ENCODE measurements at regions of chr18 and their contacts with region 1.

Region 1: DNA sequence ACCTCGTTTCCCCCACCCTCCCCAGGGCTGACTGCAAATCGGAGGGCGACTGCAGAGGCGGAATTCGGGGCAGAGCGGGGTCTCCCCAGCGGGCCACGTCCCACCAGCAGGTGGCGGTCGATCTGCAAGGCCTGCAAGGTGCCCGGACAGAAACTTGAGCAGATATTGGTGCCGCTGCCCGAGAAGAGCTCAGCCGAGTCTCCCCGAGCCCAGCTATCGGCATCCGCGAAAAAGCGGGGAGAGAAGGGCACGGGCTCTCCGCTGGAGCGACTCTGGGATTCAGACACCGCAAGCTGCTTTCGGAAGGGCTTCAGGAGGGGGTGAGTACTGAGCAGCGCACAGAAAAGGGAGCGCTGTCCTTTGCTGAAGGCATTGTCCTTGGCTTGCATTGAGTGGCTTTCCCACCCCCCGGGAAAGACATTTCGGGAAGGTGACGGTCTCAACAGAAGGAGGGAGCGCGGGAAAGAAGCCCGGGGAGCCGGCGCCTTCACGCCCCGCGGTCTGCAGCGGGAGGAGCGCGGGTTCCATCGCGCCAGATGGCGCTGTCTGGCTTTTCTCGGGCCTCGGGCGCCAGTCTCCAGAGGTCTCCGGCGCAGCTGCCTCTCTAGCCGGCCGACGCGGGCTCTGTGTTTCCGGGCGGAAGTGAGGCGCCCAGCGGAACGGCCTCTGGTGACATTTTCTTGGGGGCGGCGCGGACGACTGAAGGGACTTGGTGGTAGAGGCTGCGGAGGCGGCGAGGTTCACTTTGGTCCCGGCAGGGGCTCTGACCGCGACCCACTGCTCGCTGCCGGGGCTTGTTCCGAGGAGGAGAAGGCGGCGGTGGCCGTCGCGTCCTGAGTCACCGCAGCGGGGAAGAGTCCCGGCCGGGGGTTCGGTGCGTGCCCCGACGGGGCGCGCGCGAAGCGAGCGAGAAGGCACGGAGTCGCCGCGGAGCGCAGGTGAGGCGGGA is 69.5 kb downstream of the HAUS1 start:
- DNase-seq: peak; percentile 92
- H3K4me3 Mint-ChIP-seq: peak overlapping the region; percentile 84
- H3K27ac Mint-ChIP-seq: peak overlapping the region; percentile 94
- H3K4me1 Mint-ChIP-seq: peaks cover 6% of the 10 kb centered on the region
- H3K27me3 Mint-ChIP-seq: no peaks in the 10 kb centered on the region
- CTCF ChIP-seq: peak; percentile 89

Region 2: DNA sequence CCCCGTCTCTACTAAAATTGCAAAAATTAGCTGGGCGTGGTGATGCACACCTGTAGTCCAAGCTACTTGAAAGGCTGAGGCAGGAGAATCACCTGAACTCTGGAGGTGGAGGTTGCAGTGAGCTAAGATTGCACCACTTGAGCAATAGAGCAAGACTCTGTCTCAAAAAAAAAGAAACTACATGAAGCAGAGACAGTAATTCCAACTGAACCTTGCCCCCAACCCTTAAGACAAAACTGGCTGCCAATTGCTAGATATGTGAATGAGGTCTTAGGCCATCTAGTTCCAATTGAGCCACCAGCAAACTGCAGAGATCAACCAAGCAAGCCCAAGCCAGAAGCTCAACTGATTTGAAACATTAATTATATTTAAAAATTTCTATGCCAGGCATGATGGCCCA is 43.6 kb before region 1 on chr18:
- CTCF ChIA-PET with region 1: interaction called, 11 read pairs
- POLR2A ChIA-PET with region 1: no interaction called
- intact Hi-C with region 1: no loop called
- DNase-seq: no peak
- H3K4me3 Mint-ChIP-seq: no peak overlapping the region
- H3K27ac Mint-ChIP-seq: no peak overlapping the region
- H3K4me1 Mint-ChIP-seq: no peaks in the 10 kb centered on the region
- H3K27me3 Mint-ChIP-seq: no peaks in the 10 kb centered on the region
- CTCF ChIP-seq: no peak

Region 3: DNA sequence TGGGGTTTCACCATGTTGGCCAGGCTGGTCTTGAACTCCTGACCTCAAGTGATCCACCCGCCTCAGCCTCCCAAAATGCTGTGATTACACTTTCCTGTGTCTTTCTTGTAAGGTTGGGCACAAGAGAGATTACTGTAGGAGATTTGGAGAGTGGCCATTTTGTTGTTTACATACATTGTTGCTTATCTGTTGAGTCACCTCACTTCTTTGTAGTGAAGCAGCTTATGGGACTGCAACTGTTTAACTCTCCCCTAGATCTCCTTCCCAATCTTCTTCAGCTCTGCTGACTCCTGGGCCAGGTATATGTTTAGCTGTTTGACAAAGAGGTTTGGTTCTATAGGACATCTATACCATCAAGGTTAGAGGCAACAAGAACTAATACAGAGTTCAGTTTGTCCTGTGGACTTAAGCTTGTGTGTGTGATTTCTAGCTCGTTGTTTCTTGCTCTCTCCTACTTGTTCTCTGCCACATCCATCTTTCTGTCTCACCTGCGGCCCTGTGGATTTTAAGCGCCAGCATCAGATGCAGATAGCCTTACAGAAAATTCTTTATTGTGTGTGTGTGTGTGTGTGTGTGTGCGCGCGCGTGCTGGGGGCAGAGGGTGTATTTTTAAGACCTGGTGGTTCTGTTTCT is 26.0 kb after region 1 on chr18:
- CTCF ChIA-PET with region 1: interaction called, 23 read pairs
- POLR2A ChIA-PET with region 1: interaction called, 4 read pairs
- intact Hi-C with region 1: no loop called
- DNase-seq: peak; percentile 54
- H3K4me3 Mint-ChIP-seq: no peak overlapping the region
- H3K27ac Mint-ChIP-seq: peak overlapping the region; percentile 67
- H3K4me1 Mint-ChIP-seq: peaks cover 9% of the 10 kb centered on the region
- H3K27me3 Mint-ChIP-seq: no peaks in the 10 kb centered on the region
- CTCF ChIP-seq: no peak

Region 4: DNA sequence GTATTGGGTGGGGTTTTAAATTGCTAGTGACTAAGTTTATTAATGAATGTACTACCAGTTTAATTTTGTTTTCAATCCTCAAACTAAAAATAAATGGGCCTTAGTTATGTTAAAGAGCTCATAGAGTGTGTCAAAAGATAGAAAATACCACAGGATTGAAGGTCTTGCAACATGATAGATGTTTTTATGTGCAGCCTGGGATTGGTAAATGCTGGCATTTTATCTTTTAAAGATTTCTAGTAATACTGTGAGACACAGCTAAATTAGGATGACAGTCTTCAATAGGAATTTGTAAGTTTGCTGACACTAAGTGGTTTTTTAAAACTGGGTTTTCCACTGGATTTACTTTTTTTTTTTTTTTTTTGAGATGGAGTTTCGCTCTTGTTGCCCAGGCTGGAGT is 52.8 kb after region 1 on chr18:
- CTCF ChIA-PET with region 1: interaction called, 17 read pairs
- POLR2A ChIA-PET with region 1: interaction called, 4 read pairs
- intact Hi-C with region 1: no loop called
- DNase-seq: no peak
- H3K4me3 Mint-ChIP-seq: no peak overlapping the region
- H3K27ac Mint-ChIP-seq: no peak overlapping the region
- H3K4me1 Mint-ChIP-seq: peaks cover 20% of the 10 kb centered on the region
- H3K27me3 Mint-ChIP-seq: no peaks in the 10 kb centered on the region
- CTCF ChIP-seq: no peak

Region 5: GRCh38 chr18:46268671-46269070 is 95.0 kb after region 1 on chr18:
- CTCF ChIA-PET with region 1: interaction called, 19 read pairs
- POLR2A ChIA-PET with region 1: interaction called, 4 read pairs
- intact Hi-C with region 1: no loop called
- DNase-seq: no peak
- H3K4me3 Mint-ChIP-seq: no peak overlapping the region
- H3K27ac Mint-ChIP-seq: no peak overlapping the region
- H3K4me1 Mint-ChIP-seq: peaks cover 7% of the 10 kb centered on the region
- H3K27me3 Mint-ChIP-seq: no peaks in the 10 kb centered on the region
- CTCF ChIP-seq: no peak

Region 6: GRCh38 chr18:46660955-46661749 is 487.5 kb after region 1 on chr18:
- CTCF ChIA-PET with region 1: interaction called, 77 read pairs
- POLR2A ChIA-PET with region 1: interaction called, 8 read pairs
- intact Hi-C with region 1: loop called (anchors 1 kb)
- DNase-seq: no peak
- H3K4me3 Mint-ChIP-seq: no peak overlapping the region
- H3K27ac Mint-ChIP-seq: no peak overlapping the region
- H3K4me1 Mint-ChIP-seq: peaks cover 10% of the 10 kb centered on the region
- H3K27me3 Mint-ChIP-seq: peaks cover 2% of the 10 kb centered on the region
- CTCF ChIP-seq: no peak

Measured in MCF 10A (cell line).